Activated CD8-positive, alpha-beta T cell treated with anti-CD3 and anti-CD28 coated beads, Interleukin-2, amount 10 ng/mL, durations not matched to agents 7 days and 5 days (primary cell): ENCODE measurements at regions of chr12 and their contacts with region 1.

Region 1: DNA sequence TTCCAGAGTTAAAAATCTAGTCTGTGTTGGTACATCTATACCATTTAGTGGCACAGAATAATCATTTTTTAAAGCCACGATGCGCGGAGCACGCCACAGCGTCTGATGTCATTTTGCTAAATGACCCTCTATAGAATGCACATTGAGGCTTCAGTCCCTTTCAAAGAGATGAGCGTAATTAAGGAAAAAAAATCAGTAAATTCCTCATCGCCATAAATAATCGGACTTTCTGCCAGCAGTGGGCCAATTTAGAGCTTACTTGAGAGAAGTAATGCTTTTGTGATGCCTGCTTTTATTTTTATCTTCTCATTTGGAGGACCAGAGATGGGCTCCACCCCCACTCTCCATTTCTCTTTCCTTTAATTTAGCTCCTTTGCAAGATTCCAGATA is 4.0 kb downstream of the ASCL1 start:
- DNase-seq: no peak
- ATAC-seq: no peak
- H3K4me3 Mint-ChIP-seq: no peak overlapping the region
- H3K27ac Mint-ChIP-seq: no peak overlapping the region
- H3K4me1 Mint-ChIP-seq: peaks cover 37% of the 10 kb centered on the region
- H3K27me3 Mint-ChIP-seq: peaks cover 84% of the 10 kb centered on the region

Region 2: DNA sequence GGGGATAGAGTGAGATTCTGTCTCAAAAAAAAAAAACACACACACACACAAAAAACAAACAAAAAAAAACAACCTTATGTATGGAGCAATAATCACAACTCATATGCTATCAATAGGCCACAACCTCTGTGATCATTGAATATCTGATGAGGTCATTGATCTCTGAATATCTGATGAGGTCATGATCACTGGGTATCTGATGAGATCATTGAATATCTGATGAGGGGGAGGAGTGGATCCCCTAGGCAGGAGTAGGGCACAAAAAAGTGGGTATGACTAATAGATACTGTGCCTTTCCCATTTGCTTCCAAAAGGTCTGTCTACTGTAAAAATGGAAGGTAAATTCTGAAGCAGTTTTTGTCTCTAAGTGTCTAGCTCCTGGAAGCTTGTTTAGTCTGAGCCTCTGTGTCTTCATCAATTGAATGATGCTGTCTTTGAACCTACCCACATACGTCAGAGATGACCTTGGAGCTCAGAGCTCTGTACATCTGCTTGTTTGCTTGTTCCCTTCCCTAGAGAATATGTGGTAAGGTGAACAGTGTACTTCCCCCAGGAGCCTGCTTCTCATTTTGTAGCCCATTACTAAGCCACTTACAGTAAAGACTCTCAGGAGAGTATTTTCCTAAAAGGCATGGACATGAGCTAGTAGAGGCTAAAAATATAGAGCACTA is 58.0 kb before region 1 on chr12:
- CTCF ChIA-PET with region 1: no interaction called
- POLR2A ChIA-PET with region 1: no interaction called
- DNase-seq: no peak
- ATAC-seq: no peak
- H3K4me3 Mint-ChIP-seq: no peak overlapping the region
- H3K27ac Mint-ChIP-seq: no peak overlapping the region
- H3K4me1 Mint-ChIP-seq: no peaks in the 10 kb centered on the region
- H3K27me3 Mint-ChIP-seq: no peaks in the 10 kb centered on the region

Region 3: GRCh38 chr12:102948941-102949352 is 12.5 kb before region 1 on chr12:
- CTCF ChIA-PET with region 1: interaction called, 11 read pairs
- POLR2A ChIA-PET with region 1: no interaction called
- DNase-seq: peak; percentile 64
- ATAC-seq: no peak
- H3K4me3 Mint-ChIP-seq: no peak overlapping the region
- H3K27ac Mint-ChIP-seq: no peak overlapping the region
- H3K4me1 Mint-ChIP-seq: peaks cover 15% of the 10 kb centered on the region
- H3K27me3 Mint-ChIP-seq: peaks cover 59% of the 10 kb centered on the region

Region 4: DNA sequence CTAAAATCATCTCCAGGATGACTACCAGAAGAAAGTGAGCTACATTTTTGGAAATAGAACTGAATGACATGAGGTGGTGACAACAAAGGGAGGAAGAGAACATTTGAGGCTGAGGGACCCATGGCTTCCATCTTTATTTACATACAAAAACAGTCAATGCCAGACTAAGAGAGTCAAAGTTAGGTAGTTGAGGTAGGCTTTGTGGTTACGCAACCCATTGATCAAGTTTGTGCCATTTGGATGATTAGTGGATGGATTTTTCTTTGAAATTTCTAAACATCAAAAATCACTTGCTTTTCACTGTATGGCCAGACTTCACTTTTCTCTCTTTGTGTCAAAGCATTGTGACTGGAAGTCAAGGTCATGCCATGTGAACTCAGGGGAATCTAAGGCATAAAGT is 18.9 kb after region 1 on chr12:
- CTCF ChIA-PET with region 1: no interaction called
- POLR2A ChIA-PET with region 1: no interaction called
- DNase-seq: no peak
- ATAC-seq: no peak
- H3K4me3 Mint-ChIP-seq: no peak overlapping the region
- H3K27ac Mint-ChIP-seq: no peak overlapping the region
- H3K4me1 Mint-ChIP-seq: no peaks in the 10 kb centered on the region
- H3K27me3 Mint-ChIP-seq: peaks cover 14% of the 10 kb centered on the region